Left cardiac atrium (tissue), 4 donors: ENCODE measurements at regions of chr21 and their contacts with region 1.

Region 1: DNA sequence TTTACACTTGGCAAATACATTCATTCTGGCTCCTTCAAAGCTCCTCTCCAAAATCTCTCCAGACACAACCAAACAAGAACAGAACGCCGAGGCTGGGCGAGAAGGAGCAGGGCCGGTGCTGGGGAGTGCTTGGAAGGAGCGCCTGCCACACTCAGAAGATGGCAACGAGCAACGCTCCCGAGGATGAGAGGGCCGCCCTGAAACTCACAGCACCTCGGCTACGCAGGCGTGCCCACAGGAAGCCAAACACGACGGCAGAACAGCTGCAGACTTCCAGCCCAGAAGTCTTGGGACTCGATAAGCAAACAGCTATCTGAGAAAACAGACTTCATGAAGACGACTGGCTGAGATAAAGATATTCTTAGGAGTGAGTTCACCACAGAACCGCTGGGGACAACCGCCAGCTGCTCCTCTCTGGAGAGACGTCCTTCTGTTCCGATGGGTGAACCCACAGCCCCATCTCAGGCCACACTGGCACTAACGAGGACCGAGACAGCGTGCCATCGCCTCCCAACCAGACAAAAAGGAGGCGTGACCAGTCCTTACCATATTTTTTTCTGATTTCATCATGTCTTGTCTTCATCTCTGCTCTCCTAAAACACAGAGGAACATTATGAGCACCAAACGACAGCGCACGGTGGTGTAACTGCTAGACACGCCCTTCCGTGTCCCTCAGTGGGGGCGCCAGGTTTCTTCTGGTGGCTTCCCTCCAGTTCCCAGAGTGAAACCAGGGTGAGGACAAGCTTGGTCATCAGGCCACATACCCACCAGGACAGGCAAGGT is 18.6 kb downstream of the PTTG1IP start:
- DNase-seq: no peak
- ATAC-seq: peak in 1 of 2 donors; percentile 15

Region 2: GRCh38 chr21:44517175-44517899 is 337.5 kb before region 1 on chr21:
- intact Hi-C with region 1: no loop called
- DNase-seq: no peak
- ATAC-seq: peak in 1 of 2 donors; percentile 31

Region 3: DNA sequence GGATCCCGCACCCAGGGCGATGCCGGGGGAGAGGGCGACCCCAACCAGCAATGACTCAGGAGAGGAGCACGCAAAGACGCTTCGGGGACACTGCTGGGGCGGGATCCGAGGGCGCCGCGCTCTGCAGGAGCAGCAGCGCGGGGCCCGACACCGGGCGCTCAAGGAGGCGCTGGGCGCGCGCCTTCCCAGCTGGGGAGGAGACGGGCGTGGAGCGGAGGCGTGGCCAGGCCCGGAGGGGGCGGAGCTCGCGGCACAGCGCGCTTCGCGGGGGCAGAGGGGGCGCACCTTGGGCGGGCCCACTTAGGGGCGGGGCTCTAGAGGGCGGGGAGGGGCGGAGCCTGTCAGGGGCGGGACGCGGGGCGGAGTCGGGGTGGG is 37.4 kb before region 1 on chr21:
- intact Hi-C with region 1: loop called in 1 of 2 experiments (anchors 5 kb)
- DNase-seq: peak; percentile 92
- ATAC-seq: peak; percentile 93 to 95